ENCODE measurements at regions of chr10 and their contacts with region 1.

Region 1: DNA sequence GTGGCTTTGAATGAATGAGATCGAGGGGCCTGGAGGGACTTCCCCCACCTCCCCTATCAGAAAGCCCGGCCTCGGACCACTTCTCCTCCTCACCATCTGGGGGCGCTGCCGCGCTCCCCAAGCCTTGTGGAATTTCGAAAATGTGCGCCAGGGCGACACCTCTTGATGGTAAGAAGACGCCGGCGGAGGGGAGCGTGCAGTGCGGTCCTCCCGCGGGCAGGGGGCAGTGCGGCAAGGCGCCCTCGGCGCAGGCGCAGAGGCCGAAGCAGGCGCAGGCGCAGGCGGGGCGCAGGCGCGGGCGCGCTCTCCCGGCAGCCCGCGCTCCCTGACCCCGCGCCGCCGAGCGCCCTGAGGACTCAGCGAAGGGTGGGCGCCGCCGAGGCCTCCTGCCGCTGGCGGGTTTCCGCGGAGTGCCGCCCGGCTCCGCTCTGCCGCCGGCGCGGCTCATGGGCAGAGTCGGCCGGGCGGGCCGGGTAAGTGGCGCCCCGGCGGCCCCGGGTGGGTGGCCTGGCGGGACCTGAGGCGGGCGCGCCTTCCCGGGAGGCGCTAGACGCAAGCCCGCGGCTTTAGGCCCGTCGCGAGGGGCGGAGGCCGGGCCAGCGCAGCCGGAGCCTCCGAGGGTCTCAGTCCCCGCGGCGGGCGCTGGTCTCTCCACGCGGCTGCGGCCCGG is at the start of gene RBM17:
- DNase-seq: peak; percentile 98
- H3K4me3 Mint-ChIP-seq: peak within 1 kb of the TSS; percentile 92
- H3K27ac Mint-ChIP-seq: peak within 1 kb of the TSS; percentile 89
- H3K4me1 Mint-ChIP-seq: peaks cover 71% of the 10 kb centered on the region
- H3K27me3 Mint-ChIP-seq: no peaks in the 10 kb centered on the region
- total RNA-seq, gene RBM17: 157 to 162 TPM

Region 2: GRCh38 chr10:5629303-5630111 is 459.3 kb before region 1 on chr10:
- CTCF ChIA-PET with region 1: no interaction called
- intact Hi-C with region 1: loop called (anchors 2 kb)
- DNase-seq: peak; percentile 96
- H3K4me3 Mint-ChIP-seq: peak overlapping the region; percentile 31
- H3K27ac Mint-ChIP-seq: peak overlapping the region; percentile 73
- H3K4me1 Mint-ChIP-seq: peaks cover 29% of the 10 kb centered on the region
- H3K27me3 Mint-ChIP-seq: no peaks in the 10 kb centered on the region

Region 3: GRCh38 chr10:5752301-5752871 is 336.5 kb before region 1 on chr10:
- CTCF ChIA-PET with region 1: no interaction called
- intact Hi-C with region 1: no loop called
- DNase-seq: no peak
- H3K4me3 Mint-ChIP-seq: no peak overlapping the region
- H3K27ac Mint-ChIP-seq: no peak overlapping the region
- H3K4me1 Mint-ChIP-seq: peaks cover 26% of the 10 kb centered on the region
- H3K27me3 Mint-ChIP-seq: no peaks in the 10 kb centered on the region

Region 4: GRCh38 chr10:5889624-5890451 is 199.0 kb before region 1 on chr10 and contains the starts of genes ANKRD16 and FBH1:
- CTCF ChIA-PET with region 1: no interaction called
- intact Hi-C with region 1: loop called (anchors 2 kb)
- DNase-seq: peak; percentile 97
- H3K4me3 Mint-ChIP-seq: peak within 1 kb of the TSS; percentile 92
- H3K27ac Mint-ChIP-seq: peak within 1 kb of the TSS; percentile 74
- H3K4me1 Mint-ChIP-seq: peaks cover 55% of the 10 kb centered on the region
- H3K27me3 Mint-ChIP-seq: no peaks in the 10 kb centered on the region
- total RNA-seq, gene ANKRD16: 3.6 to 3.9 TPM
- total RNA-seq, gene FBH1: 40.4 to 42.7 TPM

Region 5: DNA sequence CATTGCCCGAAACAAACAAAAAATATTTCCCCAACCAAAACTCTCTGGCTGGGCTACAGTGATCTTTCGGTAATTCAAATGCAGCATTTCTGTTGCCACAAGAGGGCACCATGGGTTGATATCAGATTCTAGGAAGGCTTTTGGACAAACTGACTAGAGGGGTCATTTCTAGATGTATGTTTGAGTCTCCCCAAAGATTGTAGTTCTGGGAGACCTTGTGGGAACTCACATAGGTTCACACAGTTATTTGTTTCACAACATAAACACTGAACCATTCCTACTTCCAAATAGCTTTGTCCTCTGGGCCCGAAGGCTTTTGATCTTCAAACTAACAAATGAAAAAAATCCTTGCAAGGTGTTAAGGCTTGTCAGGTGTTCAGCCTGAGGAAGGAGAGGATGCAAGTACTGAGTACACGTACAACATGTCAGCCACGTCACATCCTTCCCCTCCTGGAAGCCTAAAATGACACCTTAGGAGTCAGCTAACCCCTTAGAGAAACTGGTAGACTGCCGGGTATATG is 74.6 kb before region 1 on chr10:
- CTCF ChIA-PET with region 1: interaction called, 7 read pairs
- intact Hi-C with region 1: loop called (anchors 1 kb)
- DNase-seq: peak; percentile 83
- H3K4me3 Mint-ChIP-seq: no peak overlapping the region
- H3K27ac Mint-ChIP-seq: peak overlapping the region; percentile 91
- H3K4me1 Mint-ChIP-seq: peaks cover 61% of the 10 kb centered on the region
- H3K27me3 Mint-ChIP-seq: no peaks in the 10 kb centered on the region

Region 6: DNA sequence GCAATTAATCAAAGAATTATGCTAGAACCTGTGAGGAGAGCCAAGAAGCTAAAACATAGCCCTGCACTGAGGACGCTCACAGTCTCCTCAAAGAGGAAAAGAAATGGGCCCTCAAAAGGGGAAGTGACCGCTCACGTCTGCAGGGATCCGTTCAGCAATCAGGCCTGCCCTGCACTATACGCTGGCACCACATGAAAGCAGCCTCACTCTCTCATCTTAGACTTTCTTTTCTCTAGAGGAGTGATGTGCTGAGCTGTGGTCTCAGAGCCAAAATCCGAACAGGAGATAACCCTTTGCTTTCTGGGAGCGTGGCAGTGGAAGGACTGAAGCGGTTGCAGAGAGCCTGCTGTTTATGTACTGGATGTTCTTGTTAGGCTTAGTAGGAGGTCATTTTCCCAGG is 20.4 kb before region 1 on chr10:
- CTCF ChIA-PET with region 1: interaction called, 27 read pairs
- intact Hi-C with region 1: no loop called
- DNase-seq: peak; percentile 71
- H3K4me3 Mint-ChIP-seq: peak overlapping the region; percentile 60
- H3K27ac Mint-ChIP-seq: peak overlapping the region; percentile 78
- H3K4me1 Mint-ChIP-seq: peaks cover 83% of the 10 kb centered on the region
- H3K27me3 Mint-ChIP-seq: no peaks in the 10 kb centered on the region

Region 7: DNA sequence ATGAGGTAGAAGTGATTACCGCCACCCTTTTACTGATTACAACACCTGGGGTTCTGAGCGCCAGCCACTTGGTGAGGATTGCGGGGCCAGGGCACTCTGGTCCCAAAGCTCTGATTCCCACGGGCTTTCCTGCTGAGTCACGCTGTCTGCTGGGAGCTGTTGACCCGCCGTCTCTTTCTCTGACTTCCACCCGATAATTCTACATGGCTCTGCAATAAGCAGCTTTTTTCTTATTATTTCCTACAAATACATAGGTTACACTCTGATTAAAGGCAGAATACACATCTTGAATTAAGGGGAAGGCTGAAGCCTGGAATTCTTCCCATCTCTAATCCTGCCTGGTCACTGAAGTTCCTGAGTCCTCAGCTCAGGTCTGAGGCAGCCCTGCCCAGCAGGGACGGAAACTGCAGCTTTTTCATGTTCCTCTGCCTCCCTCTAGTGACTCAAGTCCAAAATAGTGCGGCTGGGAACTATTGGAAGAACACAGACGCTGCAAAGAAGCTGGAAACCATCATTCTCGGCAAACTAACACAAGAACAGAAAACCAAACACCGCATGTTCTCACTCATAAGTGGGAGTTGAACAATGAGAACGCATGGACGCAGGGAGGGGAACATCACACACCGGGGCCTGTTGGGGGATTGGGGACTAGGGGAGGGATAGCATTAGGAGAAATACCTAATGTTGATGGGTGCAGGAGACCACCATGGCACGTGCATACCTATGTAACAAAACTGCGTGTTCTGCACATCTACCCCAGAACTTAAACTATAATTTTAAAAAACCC is 312.9 kb after region 1 on chr10:
- CTCF ChIA-PET with region 1: interaction called, 18 read pairs
- intact Hi-C with region 1: loop called (anchors 5 kb)
- DNase-seq: peak; percentile 75
- H3K4me3 Mint-ChIP-seq: no peak overlapping the region
- H3K27ac Mint-ChIP-seq: no peak overlapping the region
- H3K4me1 Mint-ChIP-seq: peaks cover 14% of the 10 kb centered on the region
- H3K27me3 Mint-ChIP-seq: peaks cover 2% of the 10 kb centered on the region